Heart right ventricle (tissue), 16 donors: ENCODE measurements at regions of chr6 and their contacts with region 1.

Region 1: DNA sequence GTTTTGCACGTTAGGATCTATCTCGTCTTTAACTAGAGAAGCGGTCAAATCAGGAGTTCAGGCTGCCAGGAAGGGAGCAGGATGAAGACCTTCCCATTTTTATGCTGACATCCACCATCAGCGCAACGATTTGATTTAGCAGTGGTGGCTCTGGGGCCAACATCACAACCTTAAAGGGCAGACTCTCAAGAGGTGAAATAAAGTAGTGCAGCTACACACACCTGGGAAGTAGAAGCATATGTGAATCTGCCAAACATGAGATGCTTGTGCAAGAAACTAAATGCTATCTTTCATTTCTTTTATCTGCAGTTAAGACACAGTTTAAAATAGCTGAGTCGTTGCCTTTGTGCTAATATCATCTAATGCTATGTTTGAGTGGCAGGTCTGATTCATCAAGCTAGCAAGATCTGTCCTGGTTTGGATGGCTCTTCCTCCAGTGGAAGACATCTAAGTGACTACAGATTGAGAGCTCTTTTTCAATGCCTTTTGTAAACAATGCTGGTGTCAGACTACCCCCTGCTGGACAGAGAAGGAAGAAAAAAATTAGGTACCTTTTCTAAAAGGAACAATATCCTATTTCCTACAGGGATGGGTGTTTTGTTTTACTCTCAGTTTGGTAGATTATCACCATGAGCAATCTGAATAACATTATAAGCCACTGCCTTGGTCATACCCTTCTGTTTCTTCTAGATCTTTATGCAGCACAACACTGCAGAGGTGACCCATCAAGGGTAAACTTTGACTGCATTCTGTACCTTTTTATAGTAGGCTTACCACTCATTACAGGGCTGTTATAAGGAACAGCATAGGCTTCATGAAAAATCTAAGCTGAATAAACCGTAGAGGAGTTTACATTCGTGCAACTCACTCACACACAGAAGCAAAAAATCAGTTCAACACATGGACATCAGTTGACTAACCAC is 171.6 kb upstream of the FBXL4 start:
- DNase-seq: no peak
- ATAC-seq: peak in 1 of 8 donors; percentile 62
- H3K4me3 ChIP-seq: no peak overlapping the region
- H3K27ac ChIP-seq: no peak overlapping the region
- H3K4me1 ChIP-seq: no peaks in the 10 kb centered on the region
- H3K27me3 ChIP-seq: peaks cover 0 to 45% (median 19%) of the 10 kb centered on the region in 7 donors
- CTCF ChIP-seq: peak; percentile 47 to 69 (median 64)

Region 2: DNA sequence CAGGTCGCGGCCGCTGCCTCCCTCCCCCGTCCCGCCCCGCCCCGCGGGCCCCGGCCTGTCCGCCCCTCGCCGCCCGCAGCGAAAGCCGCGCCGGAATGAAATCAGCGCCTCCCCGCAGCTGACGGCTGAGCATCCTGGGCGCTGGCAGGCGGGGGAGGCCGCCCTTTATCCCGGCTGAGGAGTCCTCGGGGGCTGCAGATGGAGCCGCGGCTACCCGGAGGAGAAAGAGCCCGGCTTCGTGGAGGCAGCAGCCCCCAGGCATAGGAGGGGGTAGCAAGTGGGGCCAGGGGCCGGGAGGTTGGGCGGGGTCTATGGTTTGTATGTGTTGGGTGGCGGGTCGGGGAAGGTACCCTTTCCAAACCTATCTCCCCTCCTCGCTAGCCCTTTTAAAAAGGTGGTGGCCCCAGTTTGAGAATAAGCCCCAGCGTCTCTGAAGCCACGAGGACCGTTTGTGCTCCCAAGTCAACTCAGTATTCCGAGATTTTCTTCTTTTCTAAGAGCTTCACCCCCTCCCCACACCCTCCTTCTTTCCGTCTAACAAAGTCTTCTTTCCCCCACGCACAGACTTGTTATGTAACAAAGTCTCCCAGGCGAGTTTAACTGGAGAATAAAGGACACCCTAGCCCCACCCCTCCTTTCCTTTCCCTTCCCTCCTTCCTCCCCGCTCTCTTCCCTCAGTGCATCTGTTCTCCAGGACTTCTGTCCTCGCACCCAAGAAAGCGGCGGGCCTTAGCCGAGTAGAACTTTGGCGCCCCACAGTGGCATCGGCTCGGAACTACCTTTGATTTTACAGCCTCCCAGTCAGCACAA is 274.0 kb before region 1 on chr6:
- intact Hi-C with region 1: loop called in 2 of 10 experiments (anchors 5 to 10 kb)
- DNase-seq: peak; percentile 63 to 66
- ATAC-seq: peak; percentile 20 to 87 (median 72)
- H3K4me3 ChIP-seq: peak overlapping the region in 7 of 10 donors; percentile 6 to 43 (median 30)
- H3K27ac ChIP-seq: no peak overlapping the region
- H3K4me1 ChIP-seq: peaks cover 4 to 42% (median 34%) of the 10 kb centered on the region in 9 donors
- H3K27me3 ChIP-seq: peaks cover 27 to 99% (median 90%) of the 10 kb centered on the region in 7 donors
- CTCF ChIP-seq: peak; percentile 61 to 85 (median 80)

Region 3: GRCh38 chr6:99026135-99026534 is 93.2 kb before region 1 on chr6:
- intact Hi-C with region 1: no loop called
- DNase-seq: no peak
- ATAC-seq: no peak
- H3K4me3 ChIP-seq: no peak overlapping the region
- H3K27ac ChIP-seq: no peak overlapping the region
- H3K4me1 ChIP-seq: no peaks in the 10 kb centered on the region
- H3K27me3 ChIP-seq: peaks cover 0 to 3% (median 0%) of the 10 kb centered on the region in 7 donors
- CTCF ChIP-seq: no peak

Region 4: GRCh38 chr6:99219788-99220187 is 100.4 kb after region 1 on chr6:
- intact Hi-C with region 1: no loop called
- DNase-seq: no peak
- ATAC-seq: peak in 2 of 8 donors; percentile 48 to 57
- H3K4me3 ChIP-seq: no peak overlapping the region
- H3K27ac ChIP-seq: no peak overlapping the region
- H3K4me1 ChIP-seq: no peaks in the 10 kb centered on the region
- H3K27me3 ChIP-seq: peaks cover 0 to 11% (median 0%) of the 10 kb centered on the region in 7 donors
- CTCF ChIP-seq: peak in 2 of 9 donors; percentile 6 to 15